ENCODE measurements at regions of chr1 and their contacts with region 1.

Region 1: DNA sequence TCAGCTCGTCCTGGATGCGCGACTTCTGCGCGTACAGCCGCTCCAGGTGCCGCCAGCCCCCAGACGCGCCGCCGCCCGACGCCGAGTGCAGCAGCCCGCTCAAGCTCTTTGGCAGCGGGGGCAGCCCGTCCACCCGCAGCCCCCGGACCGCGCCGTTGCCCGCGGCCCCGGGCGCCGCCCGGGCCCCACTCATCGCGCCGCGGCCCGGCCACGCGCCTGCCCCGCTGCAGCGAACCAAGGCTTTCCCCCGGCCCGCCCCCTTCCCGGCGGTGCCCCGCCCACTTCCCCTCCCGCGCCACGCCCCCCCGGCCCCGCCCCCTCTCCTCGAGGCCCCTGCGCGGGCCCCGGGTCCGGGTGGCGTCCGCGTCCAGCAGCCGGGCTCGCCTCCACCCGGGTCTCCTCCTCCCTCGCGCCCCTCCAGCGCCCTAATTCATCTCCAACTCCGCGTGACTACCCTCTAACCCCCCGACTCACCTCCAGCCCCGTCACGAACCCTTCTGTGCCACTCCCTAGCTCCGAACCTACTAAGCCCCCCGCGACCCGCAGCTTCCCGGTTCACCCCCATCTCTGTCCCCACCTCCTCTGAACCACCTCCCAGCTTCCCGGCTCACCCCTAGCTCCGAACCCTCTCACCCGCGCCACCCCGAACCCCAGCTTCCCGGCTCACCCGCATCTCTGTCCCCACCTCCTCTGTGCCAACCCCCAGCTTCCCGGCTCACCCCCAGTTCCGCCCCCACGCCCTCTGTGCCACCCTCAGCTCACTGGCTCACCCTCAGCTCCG is at the start of gene FAM89A:
- DNase-seq: peak; percentile 62
- H3K4me3 Mint-ChIP-seq: peak within 1 kb of the TSS; percentile 77
- H3K27ac Mint-ChIP-seq: no peak within 1 kb of the TSS
- H3K4me1 Mint-ChIP-seq: no peaks in the 10 kb centered on the region
- H3K27me3 Mint-ChIP-seq: peaks cover 7% of the 10 kb centered on the region
- CTCF ChIP-seq: no peak
- total RNA-seq, gene FAM89A: 25.2 and 29.2 TPM in 2 replicates

Region 2: GRCh38 chr1:230978491-230979388 is 61.5 kb before region 1 on chr1 and contains the starts of genes ARV1 and TTC13:
- CTCF ChIA-PET with region 1: no interaction called
- POLR2A ChIA-PET with region 1: interaction called, 31 read pairs
- intact Hi-C with region 1: loop called (anchors 2 kb)
- DNase-seq: peak; percentile 100
- H3K4me3 Mint-ChIP-seq: no peak within 1 kb of the TSS
- H3K27ac Mint-ChIP-seq: peak within 1 kb of the TSS; percentile 83
- H3K4me1 Mint-ChIP-seq: peaks cover 7% of the 10 kb centered on the region
- H3K27me3 Mint-ChIP-seq: no peaks in the 10 kb centered on the region
- CTCF ChIP-seq: peak; percentile 15
- total RNA-seq, gene ARV1: 41.8 and 51.8 TPM in 2 replicates
- total RNA-seq, gene TTC13: 29.9 and 35.2 TPM in 2 replicates

Region 3: GRCh38 chr1:230986976-230987375 is 53.2 kb before region 1 on chr1:
- CTCF ChIA-PET with region 1: no interaction called
- POLR2A ChIA-PET with region 1: interaction called, 11 read pairs
- intact Hi-C with region 1: no loop called
- DNase-seq: peak; percentile 90
- H3K4me3 Mint-ChIP-seq: no peak overlapping the region
- H3K27ac Mint-ChIP-seq: no peak overlapping the region
- H3K4me1 Mint-ChIP-seq: peaks cover 11% of the 10 kb centered on the region
- H3K27me3 Mint-ChIP-seq: no peaks in the 10 kb centered on the region
- CTCF ChIP-seq: no peak

Region 4: DNA sequence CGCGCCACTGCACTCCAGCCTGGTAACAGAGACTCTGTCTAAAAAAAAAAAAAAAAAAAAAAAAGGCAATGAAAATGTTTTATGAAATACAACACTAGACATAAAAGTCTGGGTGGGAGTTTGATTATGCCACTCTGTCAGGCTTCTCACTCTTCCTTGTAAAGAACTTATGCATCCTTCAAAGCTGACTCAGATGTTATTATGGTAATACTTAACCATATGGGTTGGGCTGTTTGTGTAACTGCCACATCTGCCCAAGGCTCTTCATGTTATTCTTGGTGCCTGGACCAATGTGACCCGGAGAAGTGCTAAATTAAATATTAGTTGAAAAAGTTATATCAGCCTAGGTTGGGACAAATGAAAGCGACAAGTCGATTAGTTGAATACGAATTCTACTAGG is 24.0 kb before region 1 on chr1:
- CTCF ChIA-PET with region 1: interaction called, 6 read pairs
- POLR2A ChIA-PET with region 1: interaction called, 20 read pairs
- intact Hi-C with region 1: no loop called
- DNase-seq: no peak
- H3K4me3 Mint-ChIP-seq: no peak overlapping the region
- H3K27ac Mint-ChIP-seq: no peak overlapping the region
- H3K4me1 Mint-ChIP-seq: peaks cover 22% of the 10 kb centered on the region
- H3K27me3 Mint-ChIP-seq: no peaks in the 10 kb centered on the region
- CTCF ChIP-seq: no peak

Region 5: DNA sequence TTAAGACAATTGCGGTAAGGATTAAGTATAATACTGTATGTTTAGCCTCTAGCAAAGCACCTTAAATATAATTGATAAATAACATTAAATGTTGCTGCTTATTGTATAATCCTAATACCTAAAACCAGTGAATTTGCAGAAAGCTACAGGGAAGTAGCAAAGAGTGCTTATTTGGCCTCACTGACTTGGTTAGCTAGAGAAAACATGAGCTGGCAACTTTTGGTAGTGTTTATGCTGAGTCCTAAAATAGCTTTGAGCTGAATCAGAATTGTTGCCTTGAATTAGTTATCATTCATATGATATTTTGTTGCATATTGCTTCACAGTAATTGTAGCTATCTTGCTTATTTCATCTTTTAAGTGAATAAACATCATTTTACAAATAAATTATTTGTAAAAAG is 125.2 kb after region 1 on chr1:
- CTCF ChIA-PET with region 1: no interaction called
- POLR2A ChIA-PET with region 1: interaction called, 21 read pairs
- intact Hi-C with region 1: no loop called
- DNase-seq: no peak
- H3K4me3 Mint-ChIP-seq: no peak overlapping the region
- H3K27ac Mint-ChIP-seq: no peak overlapping the region
- H3K4me1 Mint-ChIP-seq: no peaks in the 10 kb centered on the region
- H3K27me3 Mint-ChIP-seq: peaks cover 34% of the 10 kb centered on the region
- CTCF ChIP-seq: no peak

Region 6: DNA sequence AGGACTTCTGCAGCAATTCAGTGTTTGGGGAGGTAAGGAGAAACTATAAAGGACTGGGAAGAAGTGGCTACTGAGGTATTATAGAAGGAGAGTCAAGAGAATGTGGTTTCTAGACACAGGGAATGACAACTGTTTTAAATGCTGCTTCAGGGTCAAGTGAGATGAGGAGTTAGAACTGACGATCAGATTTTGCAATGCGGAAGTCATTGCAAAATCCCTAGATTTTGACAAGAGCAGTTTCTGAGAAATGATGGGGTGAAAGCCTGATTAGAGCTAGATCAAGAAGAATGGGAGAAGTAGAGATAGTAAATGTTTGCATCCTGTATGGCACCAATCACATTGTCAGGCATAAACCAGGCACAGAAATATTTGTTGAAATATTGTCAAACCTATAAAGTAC is 483.6 kb after region 1 on chr1:
- CTCF ChIA-PET with region 1: no interaction called
- POLR2A ChIA-PET with region 1: no interaction called
- intact Hi-C with region 1: no loop called
- DNase-seq: no peak
- H3K4me3 Mint-ChIP-seq: no peak overlapping the region
- H3K27ac Mint-ChIP-seq: no peak overlapping the region
- H3K4me1 Mint-ChIP-seq: peaks cover 16% of the 10 kb centered on the region
- H3K27me3 Mint-ChIP-seq: no peaks in the 10 kb centered on the region
- CTCF ChIP-seq: no peak